Ovary (tissue), 10 donors: ENCODE measurements at regions of chr3 and their contacts with region 1.

Region 1: GRCh38 chr3:51024765-51025632 is 350.3 kb downstream of the DOCK3 start:
- DNase-seq: peak in 1 of 5 donors; percentile 15
- H3K4me3 ChIP-seq: no peak overlapping the region
- H3K27ac ChIP-seq: no peak overlapping the region
- H3K4me1 ChIP-seq: no peaks in the 10 kb centered on the region
- H3K27me3 ChIP-seq: no peaks in the 10 kb centered on the region
- CTCF ChIP-seq: no peak
- EP300 ChIP-seq: no peak
- POLR2A ChIP-seq: no peak

Region 2: DNA sequence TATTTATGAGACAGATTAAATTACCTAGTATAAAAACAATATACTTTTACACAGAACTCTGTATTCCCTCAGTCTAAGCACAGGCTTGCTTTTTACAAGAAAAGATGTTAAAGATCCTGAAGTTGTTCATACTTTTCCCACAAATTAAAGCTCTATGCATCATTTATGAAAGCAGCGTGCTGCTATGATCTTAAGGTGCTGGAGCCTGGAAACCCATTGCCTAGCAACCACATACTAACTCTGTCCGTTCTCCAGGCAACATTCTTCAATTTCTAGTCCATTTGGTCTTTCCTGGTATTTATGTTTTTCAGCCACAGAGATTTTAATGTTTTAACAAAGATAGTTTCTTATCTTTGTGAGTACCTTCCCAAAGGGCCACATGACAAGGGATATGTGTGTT is 38.3 kb before region 1 on chr3:
- intact Hi-C with region 1: loop called in 1 of 4 experiments (anchors 1 kb)
- DNase-seq: no peak
- H3K4me3 ChIP-seq: no peak overlapping the region
- H3K27ac ChIP-seq: no peak overlapping the region
- H3K4me1 ChIP-seq: no peaks in the 10 kb centered on the region
- H3K27me3 ChIP-seq: no peaks in the 10 kb centered on the region
- CTCF ChIP-seq: no peak
- EP300 ChIP-seq: no peak
- POLR2A ChIP-seq: no peak

Region 3: GRCh38 chr3:52046186-52046913 is 1021.4 kb after region 1 on chr3:
- intact Hi-C with region 1: no loop called
- DNase-seq: no peak
- H3K4me3 ChIP-seq: no peak overlapping the region
- H3K27ac ChIP-seq: no peak overlapping the region
- H3K4me1 ChIP-seq: no peaks in the 10 kb centered on the region
- H3K27me3 ChIP-seq: no peaks in the 10 kb centered on the region
- CTCF ChIP-seq: no peak
- EP300 ChIP-seq: no peak
- POLR2A ChIP-seq: no peak